ENCODE measurements at regions of chr4 and their contacts with region 1.

Region 1: DNA sequence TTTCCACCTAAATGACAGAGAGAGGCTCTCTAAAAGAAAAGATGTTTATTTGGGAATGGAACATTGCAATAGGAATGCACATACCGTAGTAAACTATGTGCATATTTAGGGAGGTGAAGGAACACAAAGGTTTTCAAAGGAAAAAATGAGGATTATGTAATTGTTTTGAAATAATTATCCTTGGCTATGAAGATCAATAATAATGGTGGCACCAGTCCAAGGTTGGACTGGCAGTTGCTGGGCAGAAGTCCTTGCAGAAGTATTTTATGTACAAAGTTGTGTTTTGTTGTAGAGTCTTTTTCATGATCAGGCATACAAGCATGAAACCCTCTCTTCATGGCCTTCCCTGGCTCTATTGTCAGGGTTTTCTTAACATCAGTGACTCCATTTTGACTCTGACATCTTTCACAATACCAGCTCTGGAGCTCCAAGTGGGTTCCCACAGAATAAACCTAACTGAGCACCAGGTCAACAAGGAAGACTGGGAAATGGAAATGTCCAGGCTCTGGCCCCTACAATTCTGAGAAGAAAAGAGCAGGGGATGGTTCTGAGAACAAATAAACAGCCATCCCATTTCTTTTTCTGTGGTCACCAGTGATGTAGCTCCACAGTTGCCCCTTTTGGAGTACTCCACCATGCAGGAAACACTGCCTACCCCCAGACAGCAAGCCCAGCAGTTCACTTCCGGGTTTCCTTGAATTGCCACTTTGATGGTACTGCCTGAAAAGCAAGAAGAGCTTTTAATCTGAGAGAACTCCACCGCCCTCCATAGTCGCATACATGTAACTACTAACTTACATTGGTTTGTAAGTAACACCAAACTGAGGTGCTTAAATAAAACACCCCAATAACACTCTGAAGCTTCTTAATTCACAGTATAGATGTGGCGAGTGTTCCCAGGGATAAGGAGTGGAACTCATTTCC is 53.4 kb upstream of the HPSE start:
- DNase-seq: no peak
- H3K4me3 ChIP-seq: no peak overlapping the region
- H3K27ac ChIP-seq: no peak overlapping the region
- H3K4me1 ChIP-seq: no peaks in the 10 kb centered on the region
- H3K27me3 ChIP-seq: no peaks in the 10 kb centered on the region
- CTCF ChIP-seq: no peak

Region 2: DNA sequence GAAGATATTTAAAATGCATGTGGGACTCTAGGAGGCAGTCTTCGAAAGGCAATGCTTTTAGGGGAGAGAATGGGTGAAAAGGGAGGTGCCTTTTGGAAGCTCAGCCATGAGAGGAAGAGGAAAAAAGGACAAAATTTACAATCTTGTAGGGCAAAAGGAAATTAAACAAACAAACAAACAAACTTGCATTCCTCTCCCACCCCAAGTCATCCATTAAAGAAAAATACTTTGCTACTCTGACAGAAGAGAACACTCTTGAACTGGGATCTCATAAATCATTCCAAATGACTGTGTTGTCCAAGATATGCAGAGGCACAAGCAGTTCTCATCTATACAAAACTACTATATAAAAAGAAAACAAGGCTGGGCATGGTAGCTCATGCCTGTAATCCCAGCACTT is 20.9 kb after region 1 on chr4:
- CTCF ChIA-PET with region 1: interaction called, 14 read pairs
- POLR2A ChIA-PET with region 1: no interaction called
- intact Hi-C with region 1: no loop called
- DNase-seq: no peak
- H3K4me3 ChIP-seq: no peak overlapping the region
- H3K27ac ChIP-seq: no peak overlapping the region
- H3K4me1 ChIP-seq: no peaks in the 10 kb centered on the region
- H3K27me3 ChIP-seq: no peaks in the 10 kb centered on the region
- CTCF ChIP-seq: no peak

Region 3: GRCh38 chr4:83522239-83522638 is 134.2 kb after region 1 on chr4:
- CTCF ChIA-PET with region 1: no interaction called
- POLR2A ChIA-PET with region 1: no interaction called
- intact Hi-C with region 1: no loop called
- DNase-seq: no peak
- H3K4me3 ChIP-seq: no peak overlapping the region
- H3K27ac ChIP-seq: no peak overlapping the region
- H3K4me1 ChIP-seq: no peaks in the 10 kb centered on the region
- H3K27me3 ChIP-seq: no peaks in the 10 kb centered on the region
- CTCF ChIP-seq: no peak